ENCODE measurements at regions of chr5 and their contacts with region 1.

Region 1: GRCh38 chr5:68287976-68288706 is 72.6 kb downstream of the PIK3R1 start:
- DNase-seq: peak; percentile 83
- H3K4me3 ChIP-seq: peak overlapping the region; percentile 57 to 59
- H3K27ac ChIP-seq: peak overlapping the region in 1 of 2 experiments; percentile 97; a peak in 3 of 4 replicates
- H3K4me1 ChIP-seq: peaks cover 7 to 17% of the 10 kb centered on the region in 2 experiments; a peak in 3 of 4 replicates
- H3K27me3 ChIP-seq: no peaks in the 10 kb centered on the region
- CTCF ChIP-seq: no peak
- EP300 ChIP-seq: no peak
- RAD21 ChIP-seq: no peak

Region 2: DNA sequence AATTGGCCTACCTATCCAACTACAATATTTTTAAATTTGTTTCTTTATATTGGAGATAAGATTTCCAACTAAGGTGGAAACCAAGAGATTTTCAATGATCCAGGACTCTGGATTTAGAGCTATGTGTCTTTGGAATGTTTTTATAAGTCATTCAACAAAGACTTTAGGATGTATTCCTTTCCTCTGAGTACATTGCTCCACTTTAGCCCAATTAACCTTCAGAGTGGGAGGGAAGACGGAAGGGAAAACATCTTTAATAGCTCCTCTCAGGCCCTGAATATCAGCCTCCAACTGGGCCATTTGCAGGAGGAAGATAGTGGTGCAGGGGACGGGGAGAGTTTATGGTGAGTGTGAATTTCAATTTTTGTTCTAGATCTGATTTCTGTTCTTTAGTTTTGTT is 166.6 kb after region 1 on chr5:
- CTCF ChIA-PET with region 1: interaction called, 23 read pairs
- POLR2A ChIA-PET with region 1: no interaction called
- DNase-seq: no peak
- H3K4me3 ChIP-seq: no peak overlapping the region
- H3K27ac ChIP-seq: no peak overlapping the region
- H3K4me1 ChIP-seq: peaks cover 0 to 5% of the 10 kb centered on the region in 2 experiments; a peak in 3 of 4 replicates
- H3K27me3 ChIP-seq: no peaks in the 10 kb centered on the region
- CTCF ChIP-seq: no peak
- EP300 ChIP-seq: no peak
- RAD21 ChIP-seq: no peak

Region 3: GRCh38 chr5:68534131-68534940 is 246.2 kb after region 1 on chr5:
- CTCF ChIA-PET with region 1: interaction called, 17 read pairs
- POLR2A ChIA-PET with region 1: no interaction called
- DNase-seq: peak; percentile 52
- H3K4me3 ChIP-seq: no peak overlapping the region
- H3K27ac ChIP-seq: peak overlapping the region in 1 of 2 experiments; percentile 99; a peak in 3 of 4 replicates
- H3K4me1 ChIP-seq: peaks cover 9 to 24% of the 10 kb centered on the region in 2 experiments; a peak in 3 of 4 replicates
- H3K27me3 ChIP-seq: no peaks in the 10 kb centered on the region
- CTCF ChIP-seq: no peak
- EP300 ChIP-seq: no peak
- RAD21 ChIP-seq: no peak

Region 4: DNA sequence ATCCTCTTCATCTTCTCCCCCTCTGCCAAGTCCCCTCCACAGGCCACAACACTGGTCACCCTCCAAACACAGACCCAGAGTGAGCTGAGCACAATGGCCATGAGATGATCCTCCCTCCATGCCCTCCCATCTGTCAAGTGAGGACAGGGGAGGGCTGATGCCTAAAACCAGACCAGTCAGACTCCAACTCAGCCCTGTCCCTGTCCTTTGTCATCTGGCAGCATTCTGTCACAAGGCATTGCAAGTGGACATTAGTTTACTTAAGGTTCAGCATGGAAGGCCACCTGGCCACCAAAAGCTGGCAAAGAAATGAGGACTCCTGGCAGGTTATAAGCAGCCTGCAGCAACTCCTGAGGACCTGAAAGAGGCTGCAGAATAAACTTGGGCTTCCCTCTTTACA is 669.5 kb after region 1 on chr5:
- CTCF ChIA-PET with region 1: interaction called, 19 read pairs
- POLR2A ChIA-PET with region 1: interaction called, 3 read pairs
- DNase-seq: no peak
- H3K4me3 ChIP-seq: no peak overlapping the region
- H3K27ac ChIP-seq: no peak overlapping the region
- H3K4me1 ChIP-seq: peaks cover 0 to 5% of the 10 kb centered on the region in 2 experiments; a peak in 1 of 4 replicates
- H3K27me3 ChIP-seq: no peaks in the 10 kb centered on the region
- CTCF ChIP-seq: no peak
- EP300 ChIP-seq: no peak
- RAD21 ChIP-seq: no peak

Region 5: DNA sequence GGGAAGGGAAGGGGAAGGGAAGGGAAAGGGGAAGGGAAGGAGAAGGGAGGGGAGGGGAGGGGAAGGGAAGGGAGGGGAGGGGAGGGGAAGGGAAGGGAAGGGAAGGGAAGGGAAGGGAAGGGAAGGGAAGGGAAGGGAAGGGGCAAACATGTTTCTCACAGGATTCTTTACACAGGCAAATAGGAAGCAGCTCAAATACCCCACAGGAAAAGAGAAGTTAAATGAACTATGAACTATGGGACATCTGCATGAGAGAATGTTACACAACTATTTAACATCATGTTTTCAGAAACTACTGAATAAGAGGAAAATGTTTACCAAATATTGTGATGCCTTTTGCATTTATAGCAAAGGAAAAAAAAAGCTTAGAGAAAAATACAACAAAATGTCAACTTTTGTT is 680.3 kb after region 1 on chr5:
- CTCF ChIA-PET with region 1: interaction called, 19 read pairs
- POLR2A ChIA-PET with region 1: interaction called, 3 read pairs
- DNase-seq: no peak
- H3K4me3 ChIP-seq: no peak overlapping the region
- H3K27ac ChIP-seq: no peak overlapping the region
- H3K4me1 ChIP-seq: no peaks in the 10 kb centered on the region
- H3K27me3 ChIP-seq: no peaks in the 10 kb centered on the region
- CTCF ChIP-seq: no peak
- EP300 ChIP-seq: no peak
- RAD21 ChIP-seq: no peak

Region 6: GRCh38 chr5:69024241-69024651 is 736.1 kb after region 1 on chr5:
- CTCF ChIA-PET with region 1: interaction called, 23 read pairs
- POLR2A ChIA-PET with region 1: no interaction called
- DNase-seq: peak; percentile 68
- H3K4me3 ChIP-seq: no peak overlapping the region
- H3K27ac ChIP-seq: 0 out of 4 replicates have a peak overlapping the region, but pooled peaks of 1 of the 2 experiments have one; percentile 16
- H3K4me1 ChIP-seq: peaks cover 0 to 3% of the 10 kb centered on the region in 2 experiments; a peak in 1 of 4 replicates
- H3K27me3 ChIP-seq: no peaks in the 10 kb centered on the region
- CTCF ChIP-seq: peak; percentile 68
- EP300 ChIP-seq: no peak
- RAD21 ChIP-seq: peak; percentile 92

Region 7: GRCh38 chr5:69048230-69048629 is 760.1 kb after region 1 on chr5:
- CTCF ChIA-PET with region 1: interaction called, 14 read pairs
- POLR2A ChIA-PET with region 1: no interaction called
- DNase-seq: peak; percentile 48
- H3K4me3 ChIP-seq: no peak overlapping the region
- H3K27ac ChIP-seq: no peak overlapping the region
- H3K4me1 ChIP-seq: no peaks in the 10 kb centered on the region; a peak in 1 of 4 replicates
- H3K27me3 ChIP-seq: no peaks in the 10 kb centered on the region
- CTCF ChIP-seq: peak; percentile 37
- EP300 ChIP-seq: no peak
- RAD21 ChIP-seq: peak; percentile 91